Activated T-helper 1 cell treated with anti-CD3 and anti-CD28 coated beads, Interleukin-12 subunit alpha, Interleukin-12 subunit beta, Interleukin-2, Interleukin-4 antibody, amounts not matched to agents 30 ng/mL and 10 ng/mL and 1 ng/mL, durations not matched to agents 14 hours and 24 hours and 36 hours (primary cell): ENCODE measurements at regions of chr11 and their contacts with region 1.

Region 1: GRCh38 chr11:64803163-64803845 is at the start of gene MAP4K2:
- DNase-seq: peak; percentile 89
- H3K4me3 Mint-ChIP-seq: peak within 1 kb of the TSS; percentile 88
- H3K27ac Mint-ChIP-seq: peak within 1 kb of the TSS; percentile 83
- H3K4me1 Mint-ChIP-seq: peaks cover 26% of the 10 kb centered on the region
- H3K27me3 Mint-ChIP-seq: no peaks in the 10 kb centered on the region
- total RNA-seq, gene MAP4K2: 70.2 and 70.7 TPM in 2 replicates

Region 2: GRCh38 chr11:64894070-64894796 is 90.9 kb after region 1 on chr11:
- intact Hi-C with region 1: no loop called
- DNase-seq: peak; percentile 80
- H3K4me3 Mint-ChIP-seq: no peak overlapping the region
- H3K27ac Mint-ChIP-seq: no peak overlapping the region
- H3K4me1 Mint-ChIP-seq: no peaks in the 10 kb centered on the region
- H3K27me3 Mint-ChIP-seq: no peaks in the 10 kb centered on the region

Region 3: GRCh38 chr11:64924102-64924851 is 121.0 kb after region 1 on chr11 and contains the start of gene PPP2R5B:
- intact Hi-C with region 1: loop called (anchors 2 kb)
- DNase-seq: peak; percentile 89
- H3K4me3 Mint-ChIP-seq: peak within 1 kb of the TSS; percentile 93
- H3K27ac Mint-ChIP-seq: peak within 1 kb of the TSS; percentile 97
- H3K4me1 Mint-ChIP-seq: peaks cover 20% of the 10 kb centered on the region
- H3K27me3 Mint-ChIP-seq: no peaks in the 10 kb centered on the region
- total RNA-seq, gene PPP2R5B: 7.3 and 14.0 TPM in 2 replicates